ENCODE measurements at regions of chr11 and their contacts with region 1.

Region 1: DNA sequence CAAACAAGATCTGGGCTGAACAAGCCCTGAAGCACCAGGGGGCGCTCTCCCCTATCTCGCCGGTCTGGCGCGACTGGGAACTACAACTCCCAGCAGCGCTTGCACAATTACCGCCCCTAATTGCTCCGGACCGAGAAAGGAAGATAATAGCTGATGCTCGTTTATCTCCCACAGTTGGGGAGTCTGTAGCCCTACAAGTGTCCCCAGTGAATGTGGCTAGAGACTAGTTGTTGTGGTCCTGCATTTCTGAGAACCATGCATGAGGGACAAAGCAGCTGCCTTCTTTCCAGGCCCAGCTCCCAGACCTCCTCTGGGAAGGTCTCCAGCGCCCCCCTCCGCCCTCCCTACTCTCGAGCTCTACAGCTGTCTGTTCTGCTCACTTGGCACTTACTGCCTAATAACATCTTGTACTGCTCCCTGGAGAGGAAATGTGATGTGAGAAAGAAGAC is 34.4 kb downstream of the NRXN2 start:
- DNase-seq: peak; percentile 76 to 91 (median 86)
- ATAC-seq: peak; percentile 99
- H3K4me3 ChIP-seq: peak overlapping the region; percentile 53
- H3K4me3 Mint-ChIP-seq: peak overlapping the region; percentile 30 to 76 (median 58)
- H3K27ac ChIP-seq: no peak overlapping the region
- H3K27ac Mint-ChIP-seq: peak overlapping the region in 5 of 9 donors; percentile 13 to 80 (median 25)
- H3K4me1 ChIP-seq: peaks cover 6 to 7% of the 10 kb centered on the region in 2 donors
- H3K4me1 Mint-ChIP-seq: peaks cover 9 to 29% (median 23%) of the 10 kb centered on the region in 7 donors
- H3K27me3 ChIP-seq: peaks cover under 1 to 2% of the 10 kb centered on the region in 2 donors
- H3K27me3 Mint-ChIP-seq: peaks cover 16 to 40% (median 18%) of the 10 kb centered on the region in 5 donors

Region 2: GRCh38 chr11:64659417-64660144 is 29.0 kb before region 1 on chr11:
- CTCF ChIA-PET with region 1: no interaction called
- POLR2A ChIA-PET with region 1: no interaction called
- intact Hi-C with region 1: no loop called
- DNase-seq: no peak
- ATAC-seq: peak; percentile 64
- H3K4me3 ChIP-seq: no peak overlapping the region
- H3K4me3 Mint-ChIP-seq: no peak overlapping the region
- H3K27ac ChIP-seq: no peak overlapping the region
- H3K27ac Mint-ChIP-seq: no peak overlapping the region
- H3K4me1 ChIP-seq: no peaks in the 10 kb centered on the region
- H3K4me1 Mint-ChIP-seq: peaks cover 0 to 11% (median 0%) of the 10 kb centered on the region in 7 donors
- H3K27me3 ChIP-seq: no peaks in the 10 kb centered on the region
- H3K27me3 Mint-ChIP-seq: peaks cover 0 to 4% (median 0%) of the 10 kb centered on the region in 5 donors

Region 3: GRCh38 chr11:64723117-64723906 is 34.8 kb after region 1 on chr11 and contains the start of gene NRXN2:
- CTCF ChIA-PET with region 1: interaction called, 4 read pairs
- POLR2A ChIA-PET with region 1: interaction called, 3 read pairs
- intact Hi-C with region 1: loop called (anchors 1 kb)
- DNase-seq: peak; percentile 72 to 86 (median 80)
- ATAC-seq: peak; percentile 93
- H3K4me3 ChIP-seq: peak within 1 kb of the TSS; percentile 71
- H3K4me3 Mint-ChIP-seq: peak within 1 kb of the TSS; percentile 36 to 79 (median 66)
- H3K27ac ChIP-seq: peak within 1 kb of the TSS; percentile 81
- H3K27ac Mint-ChIP-seq: peak within 1 kb of the TSS in 8 of 9 donors; percentile 23 to 79 (median 62)
- H3K4me1 ChIP-seq: peaks cover 0 to 5% of the 10 kb centered on the region in 2 donors
- H3K4me1 Mint-ChIP-seq: peaks cover 0 to 22% (median 16%) of the 10 kb centered on the region in 7 donors
- H3K27me3 ChIP-seq: peaks cover 0 to 5% of the 10 kb centered on the region in 2 donors
- H3K27me3 Mint-ChIP-seq: peaks cover 10 to 42% (median 17%) of the 10 kb centered on the region in 5 donors
- total RNA-seq, gene NRXN2: 0.07 to 0.71 (median 0.27) TPM in 3 of 5 experiments, not detected in the others

Region 4: GRCh38 chr11:65027213-65028067 is 338.9 kb after region 1 on chr11 and contains the start of gene SNX15:
- CTCF ChIA-PET with region 1: no interaction called
- POLR2A ChIA-PET with region 1: no interaction called
- intact Hi-C with region 1: no loop called
- DNase-seq: peak; percentile 61 to 95 (median 94)
- ATAC-seq: peak; percentile 97
- H3K4me3 ChIP-seq: peak within 1 kb of the TSS; percentile 41
- H3K4me3 Mint-ChIP-seq: peak within 1 kb of the TSS; percentile 66 to 91 (median 83)
- H3K27ac ChIP-seq: peak within 1 kb of the TSS; percentile 59
- H3K27ac Mint-ChIP-seq: peak within 1 kb of the TSS; percentile 59 to 95 (median 87)
- H3K4me1 ChIP-seq: peaks cover 9 to 14% of the 10 kb centered on the region in 2 donors
- H3K4me1 Mint-ChIP-seq: peaks cover 12 to 24% (median 21%) of the 10 kb centered on the region in 7 donors
- H3K27me3 ChIP-seq: no peaks in the 10 kb centered on the region
- H3K27me3 Mint-ChIP-seq: no peaks in the 10 kb centered on the region
- total RNA-seq, gene SNX15: 13.1 to 29.0 (median 21.7) TPM

Region 5: DNA sequence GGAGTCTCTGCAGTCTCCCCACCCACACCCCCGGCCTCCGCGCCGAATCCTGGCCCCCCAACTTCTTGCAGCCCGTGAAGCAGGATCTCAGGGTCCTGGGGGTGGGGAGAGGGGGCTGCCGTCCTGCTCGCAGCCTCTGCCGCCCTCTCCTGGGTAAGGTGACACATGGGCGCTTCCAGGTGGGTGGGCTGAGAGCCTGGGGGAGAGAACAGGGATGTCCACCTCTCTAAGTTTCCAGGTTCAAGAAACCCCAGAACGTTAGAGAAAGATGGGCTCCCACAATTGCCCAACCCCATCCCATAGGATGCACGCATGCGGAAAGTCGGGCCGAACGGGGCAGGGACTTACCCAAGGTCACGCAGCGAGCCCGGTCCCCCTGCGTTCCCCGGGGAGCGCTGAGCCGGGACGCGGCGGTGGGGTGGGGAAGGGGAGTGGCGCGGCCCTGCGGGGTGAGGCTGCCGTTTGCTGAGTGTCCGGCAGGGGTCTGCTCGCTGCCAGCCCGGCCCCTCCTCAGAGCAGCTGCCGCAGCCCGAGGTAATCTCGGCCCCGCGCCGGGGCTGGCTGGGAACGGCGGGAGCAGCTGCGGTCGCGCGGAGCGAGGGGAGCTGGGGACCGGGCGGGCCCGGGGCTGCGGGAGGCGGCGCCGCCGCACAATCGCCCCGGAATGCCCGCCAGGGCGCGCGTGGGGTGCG is 492.5 kb after region 1 on chr11:
- CTCF ChIA-PET with region 1: no interaction called
- POLR2A ChIA-PET with region 1: no interaction called
- intact Hi-C with region 1: loop called in 1 of 2 experiments (anchors 1 kb)
- DNase-seq: peak in 8 of 9 donors; percentile 41 to 71 (median 45)
- ATAC-seq: peak; percentile 85
- H3K4me3 ChIP-seq: peak overlapping the region; percentile 67
- H3K4me3 Mint-ChIP-seq: peak overlapping the region; percentile 80 to 94 (median 90)
- H3K27ac ChIP-seq: peak overlapping the region; percentile 93
- H3K27ac Mint-ChIP-seq: peak overlapping the region; percentile 36 to 91 (median 84)
- H3K4me1 ChIP-seq: peaks cover 6 to 8% of the 10 kb centered on the region in 2 donors
- H3K4me1 Mint-ChIP-seq: peaks cover 7 to 30% (median 22%) of the 10 kb centered on the region in 7 donors
- H3K27me3 ChIP-seq: no peaks in the 10 kb centered on the region
- H3K27me3 Mint-ChIP-seq: peaks cover 0 to 22% (median 0%) of the 10 kb centered on the region in 5 donors